ENCODE measurements at regions of chr2 and their contacts with region 1.

Region 1: GRCh38 chr2:181142514-181142913 is 162.1 kb downstream of the UBE2E3 start:
- DNase-seq: no peak
- H3K4me3 Mint-ChIP-seq: peak overlapping the region; percentile 84
- H3K27ac Mint-ChIP-seq: peak overlapping the region; percentile 95
- H3K4me1 Mint-ChIP-seq: peaks cover 70% of the 10 kb centered on the region
- H3K27me3 Mint-ChIP-seq: no peaks in the 10 kb centered on the region

Region 2: DNA sequence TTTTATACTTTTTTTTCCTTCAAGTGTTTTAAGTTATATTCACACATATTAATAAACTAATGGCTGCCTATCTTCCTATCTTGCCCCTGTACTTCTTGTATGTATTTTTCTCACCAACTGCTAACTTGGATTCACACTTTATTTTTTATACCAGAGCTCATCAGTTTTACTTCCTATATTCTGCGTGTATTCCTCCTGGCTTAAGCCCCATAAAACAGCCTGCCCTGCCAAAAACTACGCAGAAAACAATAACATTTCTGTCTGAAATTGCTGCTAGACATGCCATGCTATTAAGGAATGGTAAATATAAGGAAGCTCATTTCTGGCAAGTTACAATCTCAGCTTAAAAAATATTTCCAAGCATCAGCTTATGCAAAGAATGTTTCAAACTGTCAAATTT is 10.2 kb after region 1 on chr2:
- intact Hi-C with region 1: loop called (anchors 1 kb)
- DNase-seq: no peak
- H3K4me3 Mint-ChIP-seq: no peak overlapping the region
- H3K27ac Mint-ChIP-seq: no peak overlapping the region
- H3K4me1 Mint-ChIP-seq: peaks cover 26% of the 10 kb centered on the region
- H3K27me3 Mint-ChIP-seq: no peaks in the 10 kb centered on the region

Region 3: DNA sequence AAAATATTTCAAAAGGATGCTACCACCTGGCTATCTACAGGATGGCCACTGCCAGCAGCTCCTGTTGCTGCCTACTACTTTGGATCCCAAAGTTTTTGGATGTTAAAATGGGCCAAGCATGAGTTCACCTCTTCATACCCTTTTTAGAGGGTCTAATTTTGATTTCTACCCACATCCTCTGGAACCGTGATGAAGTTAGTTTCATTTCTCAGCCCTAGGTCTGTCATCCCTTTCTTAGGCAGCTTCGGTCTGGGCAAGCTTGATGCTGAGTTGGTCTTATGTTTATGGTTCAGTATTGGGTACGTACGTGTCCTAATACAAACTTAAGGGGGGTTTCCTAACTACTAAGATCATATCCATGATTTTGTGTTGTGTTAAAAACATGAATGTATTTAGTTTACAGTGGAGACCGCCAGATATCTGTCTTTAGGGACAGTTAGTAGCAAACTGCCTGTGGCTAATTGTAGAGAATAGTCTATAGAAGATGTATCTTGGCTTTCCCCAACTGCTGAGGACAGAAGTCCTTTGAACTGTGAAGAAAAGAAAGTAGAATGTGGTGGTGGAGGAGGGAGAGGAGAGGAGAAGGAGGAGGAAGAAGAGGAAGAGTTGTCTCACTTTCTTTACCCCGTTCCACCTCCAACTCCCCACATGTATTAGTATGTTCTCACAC is 22.8 kb after region 1 on chr2:
- intact Hi-C with region 1: loop called (anchors 1 kb)
- DNase-seq: no peak
- H3K4me3 Mint-ChIP-seq: peak overlapping the region; percentile 67
- H3K27ac Mint-ChIP-seq: peak overlapping the region; percentile 93
- H3K4me1 Mint-ChIP-seq: peaks cover 60% of the 10 kb centered on the region
- H3K27me3 Mint-ChIP-seq: no peaks in the 10 kb centered on the region

Region 4: DNA sequence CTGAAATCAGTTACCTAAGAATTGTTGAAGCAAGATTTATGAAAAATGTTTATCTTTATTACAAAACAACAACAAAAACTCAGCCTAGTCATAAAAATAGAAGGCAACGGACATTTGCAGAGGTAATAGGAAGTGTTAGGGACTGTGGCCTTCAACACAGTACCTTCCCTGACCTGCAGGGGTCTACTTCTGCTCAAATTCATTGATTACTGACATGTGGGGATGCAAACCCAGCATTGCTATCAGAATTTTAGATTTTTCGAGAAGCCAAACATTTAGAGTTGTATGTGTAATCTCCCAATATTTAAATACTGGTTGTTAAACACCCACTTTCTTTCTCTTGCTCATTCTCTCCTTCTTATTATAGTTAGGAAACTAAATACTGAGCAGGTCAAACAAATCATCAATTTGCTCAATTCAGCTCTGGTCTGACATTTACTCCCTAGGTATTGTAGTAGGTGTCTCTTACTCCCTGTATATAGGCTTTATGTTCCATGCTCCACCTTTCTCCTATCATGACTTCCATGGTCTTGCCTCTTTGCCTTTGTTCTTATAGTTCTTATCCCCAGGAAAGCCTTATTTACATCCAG is 36.4 kb after region 1 on chr2:
- intact Hi-C with region 1: loop called (anchors 1 kb)
- DNase-seq: no peak
- H3K4me3 Mint-ChIP-seq: peak overlapping the region; percentile 7
- H3K27ac Mint-ChIP-seq: peak overlapping the region; percentile 57
- H3K4me1 Mint-ChIP-seq: peaks cover 56% of the 10 kb centered on the region
- H3K27me3 Mint-ChIP-seq: no peaks in the 10 kb centered on the region

Region 5: DNA sequence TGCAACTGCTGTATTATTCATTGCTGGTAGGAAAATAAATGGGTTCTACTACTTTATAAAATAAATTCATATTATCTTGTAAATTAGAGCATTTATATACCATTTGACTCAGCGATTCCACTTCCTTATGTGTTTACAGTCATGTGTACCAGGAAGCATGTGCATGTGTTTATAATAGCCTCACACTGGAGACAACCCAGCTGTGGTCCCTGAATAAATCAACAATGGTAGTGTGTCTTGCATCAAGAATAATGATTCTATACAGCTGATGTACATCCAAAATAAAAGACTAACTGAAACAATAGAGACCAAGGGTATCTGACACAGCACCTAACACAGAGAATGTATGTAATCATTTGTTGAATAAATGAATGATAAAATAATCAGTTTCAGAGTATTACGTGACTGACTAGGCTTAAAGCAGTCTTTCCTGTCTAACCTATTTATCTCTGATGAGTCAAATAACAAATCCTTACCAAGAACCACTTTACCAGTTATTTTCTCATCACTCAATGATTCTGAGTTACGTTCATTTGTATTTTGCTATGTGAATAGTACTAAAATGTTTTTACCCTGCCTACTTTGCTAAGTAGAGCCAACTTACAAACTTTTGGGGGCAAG is 54.7 kb after region 1 on chr2:
- intact Hi-C with region 1: loop called (anchors 1 kb)
- DNase-seq: no peak
- H3K4me3 Mint-ChIP-seq: peak overlapping the region; percentile 11
- H3K27ac Mint-ChIP-seq: peak overlapping the region; percentile 73
- H3K4me1 Mint-ChIP-seq: peaks cover 55% of the 10 kb centered on the region
- H3K27me3 Mint-ChIP-seq: no peaks in the 10 kb centered on the region

Region 6: GRCh38 chr2:181223234-181223633 is 80.7 kb after region 1 on chr2:
- intact Hi-C with region 1: loop called (anchors 1 kb)
- DNase-seq: no peak
- H3K4me3 Mint-ChIP-seq: peak overlapping the region; percentile 34
- H3K27ac Mint-ChIP-seq: peak overlapping the region; percentile 93
- H3K4me1 Mint-ChIP-seq: peaks cover 31% of the 10 kb centered on the region
- H3K27me3 Mint-ChIP-seq: no peaks in the 10 kb centered on the region

Region 7: DNA sequence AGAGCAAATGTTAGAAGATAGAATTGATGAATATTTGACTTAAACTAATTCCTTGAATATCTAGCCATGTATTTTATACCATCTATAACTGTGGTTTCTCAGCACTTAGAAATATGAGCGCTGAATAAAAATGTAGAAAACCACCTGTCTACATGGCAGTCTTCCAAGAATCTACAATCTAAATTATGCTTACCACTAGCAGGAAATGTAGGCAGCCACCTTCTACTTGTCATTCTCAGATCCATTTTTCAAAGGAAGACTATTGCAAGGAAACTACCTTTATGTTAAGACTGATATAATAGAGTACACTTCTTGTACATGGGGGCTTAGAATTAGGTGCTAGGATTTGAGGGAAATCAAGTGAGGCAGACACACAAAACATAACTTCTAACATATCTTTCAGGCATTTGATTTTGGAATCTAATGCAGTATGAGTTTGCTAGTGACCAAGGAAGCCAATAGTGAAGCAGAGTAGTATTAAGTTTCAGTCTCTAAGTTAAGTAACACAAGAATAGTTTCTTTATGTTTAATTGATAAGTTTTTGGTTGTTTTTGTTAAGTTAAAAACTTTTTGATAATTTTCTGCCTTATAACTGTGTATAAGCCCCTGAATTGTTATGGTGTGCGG is 138.8 kb after region 1 on chr2:
- intact Hi-C with region 1: no loop called
- DNase-seq: no peak
- H3K4me3 Mint-ChIP-seq: no peak overlapping the region
- H3K27ac Mint-ChIP-seq: peak overlapping the region; percentile 6
- H3K4me1 Mint-ChIP-seq: peaks cover 34% of the 10 kb centered on the region
- H3K27me3 Mint-ChIP-seq: no peaks in the 10 kb centered on the region

Region 8: DNA sequence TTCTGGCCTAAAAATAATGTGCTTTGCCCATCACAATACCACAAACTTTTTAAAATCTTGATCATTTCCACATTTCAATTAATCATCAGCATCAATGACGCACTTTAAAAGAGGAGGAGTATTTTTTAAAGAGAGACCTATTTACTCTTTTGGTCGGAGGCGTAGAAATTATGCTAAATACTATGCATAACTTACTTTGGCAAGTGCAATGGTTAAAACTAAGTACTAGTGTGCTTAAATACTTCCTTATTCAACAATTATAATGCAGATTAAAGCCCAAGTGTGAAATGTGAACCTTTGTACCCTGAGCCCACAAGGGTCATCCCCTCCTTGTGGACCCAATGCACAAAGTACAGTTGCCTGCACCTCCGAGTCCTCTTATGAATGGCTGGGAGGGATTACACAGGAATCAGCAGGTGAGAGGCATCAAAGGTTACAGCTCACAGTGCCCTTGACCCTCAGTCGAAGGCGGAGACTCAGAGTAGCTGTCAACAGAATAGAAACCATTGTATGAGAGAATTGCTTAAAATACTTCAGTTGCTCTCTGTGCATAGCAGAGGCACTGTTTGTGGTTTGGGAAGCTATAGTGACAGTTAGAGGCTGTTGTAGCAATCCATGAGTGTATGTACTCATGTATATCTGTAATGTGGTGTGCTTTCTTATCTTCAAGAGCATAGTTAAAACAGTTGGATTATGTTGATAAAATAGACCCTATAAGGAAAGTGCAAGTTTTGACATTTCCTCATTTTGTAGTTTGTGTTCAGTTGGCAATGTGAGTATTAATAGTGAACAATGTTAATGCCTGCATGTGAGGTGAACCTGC is 163.0 kb after region 1 on chr2:
- intact Hi-C with region 1: loop called (anchors 1 kb)
- DNase-seq: peak; percentile 62
- H3K4me3 Mint-ChIP-seq: peak overlapping the region; percentile 74
- H3K27ac Mint-ChIP-seq: peak overlapping the region; percentile 96
- H3K4me1 Mint-ChIP-seq: peaks cover 84% of the 10 kb centered on the region
- H3K27me3 Mint-ChIP-seq: no peaks in the 10 kb centered on the region